ENCODE measurements at regions of chr15 and their contacts with region 1.

Region 1: GRCh38 chr15:98525661-98526001 is 122.7 kb upstream of the IGF1R start:
- DNase-seq: no peak
- H3K4me3 ChIP-seq: no peak overlapping the region
- H3K27ac ChIP-seq: no peak overlapping the region
- H3K4me1 ChIP-seq: no peaks in the 10 kb centered on the region
- H3K27me3 ChIP-seq: peaks cover 3% of the 10 kb centered on the region
- CTCF ChIP-seq: no peak

Region 2: GRCh38 chr15:98375513-98376340 is 149.9 kb before region 1 on chr15:
- CTCF ChIA-PET with region 1: no interaction called
- dilution Hi-C with region 1: no loop called
- in situ Hi-C with region 1: no loop called
- intact Hi-C with region 1: no loop called
- DNase-seq: no peak
- H3K4me3 ChIP-seq: no peak overlapping the region
- H3K27ac ChIP-seq: no peak overlapping the region
- H3K4me1 ChIP-seq: no peaks in the 10 kb centered on the region
- H3K27me3 ChIP-seq: no peaks in the 10 kb centered on the region
- CTCF ChIP-seq: no peak

Region 3: GRCh38 chr15:98395974-98396610 is 129.5 kb before region 1 on chr15:
- CTCF ChIA-PET with region 1: no interaction called
- dilution Hi-C with region 1: no loop called
- in situ Hi-C with region 1: no loop called
- intact Hi-C with region 1: no loop called
- DNase-seq: no peak
- H3K4me3 ChIP-seq: no peak overlapping the region
- H3K27ac ChIP-seq: no peak overlapping the region
- H3K4me1 ChIP-seq: no peaks in the 10 kb centered on the region
- H3K27me3 ChIP-seq: peaks cover 2% of the 10 kb centered on the region
- CTCF ChIP-seq: no peak

Region 4: DNA sequence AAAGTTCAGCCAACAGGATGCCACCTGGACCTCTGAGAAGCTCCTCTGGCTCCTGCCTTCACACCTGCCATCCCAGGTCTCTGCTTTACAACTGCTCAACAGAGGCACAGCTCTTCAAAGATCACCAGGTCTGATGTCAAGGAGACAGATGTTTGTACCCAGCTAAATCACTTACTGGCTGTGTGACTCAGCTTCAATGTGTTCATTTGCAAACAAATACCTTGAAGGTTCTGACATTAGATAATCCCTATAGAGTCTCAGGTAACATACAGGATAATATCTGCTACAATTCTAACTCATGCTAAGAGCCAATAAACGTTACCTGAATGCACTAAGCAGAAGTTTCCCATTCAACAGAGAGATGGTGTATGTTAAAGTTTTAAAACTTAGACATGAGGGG is 40.7 kb before region 1 on chr15:
- CTCF ChIA-PET with region 1: no interaction called
- dilution Hi-C with region 1: no loop called
- in situ Hi-C with region 1: no loop called
- intact Hi-C with region 1: no loop called
- DNase-seq: no peak
- H3K4me3 ChIP-seq: no peak overlapping the region
- H3K27ac ChIP-seq: no peak overlapping the region
- H3K4me1 ChIP-seq: no peaks in the 10 kb centered on the region
- H3K27me3 ChIP-seq: peaks cover 1% of the 10 kb centered on the region
- CTCF ChIP-seq: no peak

Region 5: DNA sequence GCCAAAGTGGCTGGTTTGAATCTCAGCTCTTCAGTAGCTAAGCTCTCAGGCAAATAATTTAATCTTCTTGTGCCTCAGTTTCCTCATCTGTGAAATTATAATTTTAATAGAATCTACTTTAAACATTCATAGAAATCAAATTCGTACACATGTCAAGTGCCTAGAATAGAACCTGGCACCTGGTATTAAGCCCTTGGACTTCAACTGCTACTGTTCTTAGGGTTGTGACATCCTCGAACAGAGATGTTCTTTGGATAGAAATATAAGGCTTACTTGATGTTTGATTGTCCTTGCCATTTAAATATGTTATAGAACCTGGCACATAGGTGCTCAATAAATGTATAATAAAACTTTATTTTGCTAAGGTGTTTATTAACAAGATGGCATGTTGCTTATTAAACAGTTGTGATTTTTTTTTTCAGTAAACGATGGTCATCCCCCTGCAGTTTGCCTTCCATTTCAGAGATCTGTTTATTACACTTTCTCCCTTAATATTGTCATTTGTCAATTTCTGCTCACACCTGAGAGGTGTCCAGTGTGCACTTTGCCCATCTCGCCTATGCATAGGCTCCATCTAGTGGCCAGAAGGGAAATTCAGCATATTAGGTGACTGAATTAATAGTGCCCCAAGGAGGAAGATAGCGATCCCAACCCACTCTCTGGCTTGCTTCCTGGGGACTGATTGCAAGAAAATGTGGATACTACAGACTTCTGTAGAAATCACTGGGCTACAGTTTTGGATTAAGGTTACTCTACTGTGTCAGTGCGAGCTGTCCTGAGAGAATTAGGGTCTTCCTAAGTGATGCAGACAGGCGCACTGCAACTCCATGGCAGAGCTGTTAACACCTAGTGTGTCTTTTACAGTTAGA is 133.4 kb after region 1 on chr15:
- CTCF ChIA-PET with region 1: interaction called, 3 read pairs
- dilution Hi-C with region 1: no loop called
- in situ Hi-C with region 1: loop called in 1 of 2 experiments (anchors 5 kb)
- intact Hi-C with region 1: no loop called
- DNase-seq: peak; percentile 60
- H3K4me3 ChIP-seq: no peak overlapping the region
- H3K27ac ChIP-seq: no peak overlapping the region
- H3K4me1 ChIP-seq: peaks cover 49% of the 10 kb centered on the region
- H3K27me3 ChIP-seq: no peaks in the 10 kb centered on the region
- CTCF ChIP-seq: peak; percentile 91

Region 6: GRCh38 chr15:99052205-99052604 is 526.6 kb after region 1 on chr15:
- CTCF ChIA-PET with region 1: no interaction called
- dilution Hi-C with region 1: no loop called
- in situ Hi-C with region 1: no loop called
- intact Hi-C with region 1: no loop called
- DNase-seq: no peak
- H3K4me3 ChIP-seq: no peak overlapping the region
- H3K27ac ChIP-seq: no peak overlapping the region
- H3K4me1 ChIP-seq: no peaks in the 10 kb centered on the region
- H3K27me3 ChIP-seq: peaks cover 2% of the 10 kb centered on the region
- CTCF ChIP-seq: no peak